Psoas muscle (tissue), 8 donors: ENCODE measurements at regions of chr6 and their contacts with region 1.

Region 1: GRCh38 chr6:170357812-170358211 is 51.3 kb downstream of the FAM120B start:
- DNase-seq: no peak
- ATAC-seq: peak in 2 of 4 donors; percentile 22 to 33
- H3K4me3 ChIP-seq: no peak overlapping the region
- H3K27ac ChIP-seq: no peak overlapping the region
- H3K4me1 ChIP-seq: peaks cover 7% of the 10 kb centered on the region
- H3K27me3 ChIP-seq: no peaks in the 10 kb centered on the region
- CTCF ChIP-seq: no peak

Region 2: DNA sequence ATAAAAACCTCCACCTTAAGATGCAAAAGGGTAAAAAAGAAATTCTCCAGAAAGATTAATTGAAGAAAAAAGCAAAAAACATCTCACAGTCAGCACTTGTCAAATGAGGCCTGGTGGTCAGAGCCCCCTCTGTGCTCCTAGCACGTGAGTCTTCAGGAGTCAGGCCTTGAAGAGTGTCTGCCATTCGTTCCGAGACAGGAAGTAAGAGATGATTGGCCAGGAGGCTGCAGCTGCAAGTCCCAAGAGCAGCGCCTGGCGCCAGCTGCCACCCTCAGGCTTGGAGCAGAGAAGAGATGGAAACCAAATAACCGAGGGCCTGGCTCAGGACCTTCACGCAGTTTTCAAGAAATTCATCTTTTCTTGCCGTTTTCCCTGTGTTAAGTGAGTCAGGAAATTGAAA is 13.8 kb after region 1 on chr6:
- intact Hi-C with region 1: loop called in 1 of 2 experiments (anchors 2 kb)
- DNase-seq: no peak
- ATAC-seq: peak; percentile 28 to 70 (median 53)
- H3K4me3 ChIP-seq: no peak overlapping the region
- H3K27ac ChIP-seq: peak overlapping the region; percentile 74
- H3K4me1 ChIP-seq: peaks cover 27% of the 10 kb centered on the region
- H3K27me3 ChIP-seq: no peaks in the 10 kb centered on the region
- CTCF ChIP-seq: no peak